Panc1 (cell line): ENCODE measurements at regions of chr7 and their contacts with region 1.

Region 1: GRCh38 chr7:36723951-36724664 is at the start of gene AOAH:
- DNase-seq: no peak
- ATAC-seq: no peak
- H3K4me3 ChIP-seq: no peak within 1 kb of the TSS
- H3K27ac ChIP-seq: no peak within 1 kb of the TSS
- H3K4me1 ChIP-seq: no peaks in the 10 kb centered on the region
- H3K27me3 ChIP-seq: no peaks in the 10 kb centered on the region
- CTCF ChIP-seq: no peak
- total RNA-seq, gene AOAH: 0.31 TPM

Region 2: DNA sequence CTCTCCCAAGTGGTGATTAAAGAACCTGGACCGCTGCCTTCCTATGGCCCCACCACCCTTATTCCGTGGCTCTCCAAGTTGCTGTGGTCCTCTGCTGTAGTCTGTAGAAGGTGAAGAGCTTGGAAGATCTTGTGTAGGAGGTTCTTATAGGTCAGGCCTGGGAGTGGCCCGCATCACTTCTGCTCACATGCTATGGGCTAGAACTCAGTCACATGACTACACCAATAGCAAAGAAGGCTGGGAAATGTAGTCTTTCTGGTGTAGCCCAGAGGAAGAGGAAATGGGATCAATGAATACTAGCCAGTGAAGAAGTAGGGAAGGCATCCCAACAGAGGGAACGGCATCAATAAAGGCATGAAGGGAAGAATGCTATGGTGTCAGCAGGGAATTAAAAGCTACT is 41.5 kb after region 1 on chr7:
- CTCF ChIA-PET with region 1: no interaction called
- POLR2A ChIA-PET with region 1: interaction called, 13 read pairs
- in situ Hi-C with region 1: no loop called
- intact Hi-C with region 1: no loop called
- DNase-seq: no peak
- ATAC-seq: 0 out of 2 replicates have a peak, but pooled peaks have one; percentile 48
- H3K4me3 ChIP-seq: no peak overlapping the region
- H3K27ac ChIP-seq: no peak overlapping the region
- H3K4me1 ChIP-seq: no peaks in the 10 kb centered on the region
- H3K27me3 ChIP-seq: no peaks in the 10 kb centered on the region
- CTCF ChIP-seq: no peak